ENCODE measurements at regions of chr13 and their contacts with region 1.

Region 1: DNA sequence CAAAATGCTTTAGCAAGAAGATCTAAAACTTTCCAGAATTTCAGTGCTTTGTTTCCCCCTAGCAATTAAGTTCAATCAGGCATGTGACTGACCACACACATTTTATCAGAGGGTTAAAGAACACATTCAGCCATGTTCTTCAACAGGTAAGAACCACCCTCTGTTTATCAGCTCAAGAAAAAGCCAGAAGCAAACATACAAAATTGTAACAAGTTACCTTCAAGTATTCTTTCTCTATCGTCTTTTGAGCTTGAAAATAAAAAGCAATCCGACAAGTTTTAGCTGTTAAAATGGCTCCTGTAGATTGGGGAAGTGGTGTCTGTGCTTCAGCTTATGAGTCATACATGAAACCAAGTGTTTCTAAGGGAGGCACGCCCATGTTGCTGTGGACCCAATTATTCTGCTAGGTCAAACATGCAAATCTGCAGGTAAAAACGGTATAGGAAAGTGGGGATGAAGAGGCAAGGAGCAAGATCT is at the start of gene ELF1:
- DNase-seq: peak; percentile 91
- H3K4me3 Mint-ChIP-seq: peak within 1 kb of the TSS; percentile 77
- H3K27ac Mint-ChIP-seq: peak within 1 kb of the TSS; percentile 99
- H3K4me1 Mint-ChIP-seq: peaks cover 33% of the 10 kb centered on the region
- H3K27me3 Mint-ChIP-seq: no peaks in the 10 kb centered on the region
- CTCF ChIP-seq: no peak
- total RNA-seq, gene ELF1: 73.7 and 82.1 TPM in 2 replicates

Region 2: DNA sequence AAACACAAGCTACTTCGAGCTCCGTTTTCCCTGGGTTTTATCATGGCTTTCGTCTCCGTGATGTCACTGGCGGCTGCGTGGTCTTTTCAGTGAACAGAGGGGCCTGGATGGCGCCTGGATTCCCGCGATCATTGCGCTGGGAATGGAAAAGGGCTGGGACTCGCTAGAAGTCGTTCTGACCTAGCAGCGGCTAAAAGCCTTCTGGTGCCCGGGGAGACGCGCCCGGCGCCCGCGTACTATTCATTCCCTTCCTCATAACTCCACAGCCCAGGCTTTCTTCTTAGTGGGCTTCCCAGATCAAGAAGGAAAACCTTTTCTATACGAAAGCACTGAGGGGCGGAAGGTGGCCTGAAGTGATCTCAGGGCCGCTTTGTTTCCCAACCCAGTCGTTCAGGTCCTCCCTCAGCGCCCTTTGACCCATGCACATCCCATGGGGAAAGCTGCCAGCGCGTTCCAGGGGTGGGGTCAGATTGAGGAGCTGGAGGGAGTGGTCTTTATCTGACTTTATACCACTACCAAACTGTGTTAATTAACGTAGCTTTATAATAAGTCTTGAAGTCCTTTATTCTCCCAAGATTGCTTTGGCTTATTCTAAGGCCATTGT is 96.5 kb before region 1 on chr13:
- CTCF ChIA-PET with region 1: no interaction called
- POLR2A ChIA-PET with region 1: interaction called, 30 read pairs
- intact Hi-C with region 1: no loop called
- DNase-seq: no peak
- H3K4me3 Mint-ChIP-seq: peak overlapping the region; percentile 87
- H3K27ac Mint-ChIP-seq: peak overlapping the region; percentile 35
- H3K4me1 Mint-ChIP-seq: peaks cover 9% of the 10 kb centered on the region
- H3K27me3 Mint-ChIP-seq: no peaks in the 10 kb centered on the region
- CTCF ChIP-seq: no peak

Region 3: GRCh38 chr13:40984668-40985366 is 34.2 kb before region 1 on chr13:
- CTCF ChIA-PET with region 1: interaction called, 3 read pairs
- POLR2A ChIA-PET with region 1: interaction called, 10 read pairs
- intact Hi-C with region 1: no loop called
- DNase-seq: peak; percentile 34
- H3K4me3 Mint-ChIP-seq: peak overlapping the region; percentile 72
- H3K27ac Mint-ChIP-seq: peak overlapping the region; percentile 40
- H3K4me1 Mint-ChIP-seq: peaks cover 42% of the 10 kb centered on the region
- H3K27me3 Mint-ChIP-seq: no peaks in the 10 kb centered on the region
- CTCF ChIP-seq: no peak

Region 4: DNA sequence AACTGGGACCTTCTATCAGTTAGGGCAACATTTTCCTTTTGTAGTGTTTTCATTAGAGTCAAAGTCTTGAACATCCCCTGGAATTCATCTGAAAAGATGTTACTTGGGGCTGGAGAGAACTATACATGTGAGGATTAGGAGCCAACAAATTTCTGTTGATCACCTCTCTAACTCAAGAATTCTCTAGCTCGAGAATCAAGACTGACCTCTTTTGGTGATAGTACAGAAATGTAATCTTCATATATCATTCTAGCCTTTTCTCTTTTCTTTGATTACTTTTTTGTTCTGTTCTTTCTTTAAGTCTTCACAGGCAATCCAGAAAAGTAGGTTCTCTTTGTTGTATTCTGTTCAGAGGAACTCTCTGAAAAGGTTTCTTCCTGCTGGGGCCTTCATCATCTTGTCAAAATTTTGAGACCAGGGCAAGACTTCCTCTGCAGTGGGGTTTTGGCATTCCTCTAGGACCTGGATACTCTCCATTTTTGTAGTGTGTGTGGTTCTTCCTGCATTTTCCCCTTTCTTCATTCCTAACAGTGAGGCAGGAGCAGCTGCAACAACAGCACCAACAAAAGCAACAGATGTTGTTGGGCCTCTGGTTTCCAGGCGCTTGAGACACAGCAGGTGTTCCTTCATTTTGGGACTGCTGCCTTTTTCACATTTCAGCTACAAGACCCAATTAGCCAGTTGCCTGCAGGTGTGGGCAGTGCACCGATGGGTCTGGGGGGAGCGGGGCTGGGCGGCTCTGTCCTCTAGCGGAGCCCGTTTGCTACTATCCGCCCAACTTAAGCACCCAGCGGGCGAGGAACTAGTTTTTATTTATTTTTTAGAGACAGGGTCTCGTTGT is 26.2 kb before region 1 on chr13:
- CTCF ChIA-PET with region 1: interaction called, 3 read pairs
- POLR2A ChIA-PET with region 1: interaction called, 15 read pairs
- intact Hi-C with region 1: no loop called
- DNase-seq: no peak
- H3K4me3 Mint-ChIP-seq: no peak overlapping the region
- H3K27ac Mint-ChIP-seq: no peak overlapping the region
- H3K4me1 Mint-ChIP-seq: peaks cover 28% of the 10 kb centered on the region
- H3K27me3 Mint-ChIP-seq: no peaks in the 10 kb centered on the region
- CTCF ChIP-seq: peak; percentile 9

Region 5: GRCh38 chr13:41008349-41008980 is 10.6 kb before region 1 on chr13:
- CTCF ChIA-PET with region 1: interaction called, 3 read pairs
- POLR2A ChIA-PET with region 1: interaction called, 35 read pairs
- intact Hi-C with region 1: no loop called
- DNase-seq: peak; percentile 85
- H3K4me3 Mint-ChIP-seq: peak overlapping the region; percentile 13
- H3K27ac Mint-ChIP-seq: peak overlapping the region; percentile 26
- H3K4me1 Mint-ChIP-seq: peaks cover 41% of the 10 kb centered on the region
- H3K27me3 Mint-ChIP-seq: no peaks in the 10 kb centered on the region
- CTCF ChIP-seq: no peak

Region 6: DNA sequence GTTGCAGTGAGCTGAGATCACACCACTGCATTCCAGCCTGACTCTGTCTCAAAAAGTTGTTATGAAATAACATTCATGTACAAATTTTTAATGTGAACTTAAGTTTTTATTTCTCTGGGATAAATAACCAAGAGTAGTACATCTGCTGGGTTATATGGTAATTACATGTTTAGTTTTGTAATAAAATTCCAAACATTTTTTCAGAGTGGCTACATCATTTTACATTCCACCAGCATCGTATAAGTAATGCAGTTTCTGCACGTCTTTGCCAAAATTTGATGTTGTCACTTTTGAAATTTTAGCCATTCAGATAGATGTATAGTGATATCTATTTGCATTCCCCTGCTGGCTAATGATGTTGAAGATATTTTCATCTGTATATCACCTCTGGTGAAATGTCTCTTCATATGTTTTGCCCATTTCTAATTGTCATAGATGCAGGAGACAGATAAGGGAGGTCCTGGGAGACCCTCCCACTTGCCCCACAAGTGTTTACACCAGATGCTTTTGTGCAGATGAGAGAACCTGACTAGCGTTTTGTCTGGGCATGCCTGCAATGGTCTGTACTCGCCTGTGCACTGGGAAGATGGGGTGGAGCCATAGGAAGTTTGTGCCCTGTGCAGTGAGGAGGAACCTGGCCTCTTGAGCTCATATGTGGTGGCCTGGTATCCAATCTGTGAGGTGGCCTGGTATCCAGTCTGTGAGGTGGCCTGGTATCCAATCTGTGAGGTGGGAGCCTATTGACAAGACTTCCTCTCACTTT is 126.3 kb after region 1 on chr13:
- CTCF ChIA-PET with region 1: no interaction called
- POLR2A ChIA-PET with region 1: no interaction called
- intact Hi-C with region 1: no loop called
- DNase-seq: peak; percentile 57
- H3K4me3 Mint-ChIP-seq: no peak overlapping the region
- H3K27ac Mint-ChIP-seq: peak overlapping the region; percentile 86
- H3K4me1 Mint-ChIP-seq: peaks cover 8% of the 10 kb centered on the region
- H3K27me3 Mint-ChIP-seq: no peaks in the 10 kb centered on the region
- CTCF ChIP-seq: no peak

Measured in MCF 10A (cell line).